SK-N-SH (cell line): ENCODE measurements at regions of chr1 and their contacts with region 1.

Region 1: DNA sequence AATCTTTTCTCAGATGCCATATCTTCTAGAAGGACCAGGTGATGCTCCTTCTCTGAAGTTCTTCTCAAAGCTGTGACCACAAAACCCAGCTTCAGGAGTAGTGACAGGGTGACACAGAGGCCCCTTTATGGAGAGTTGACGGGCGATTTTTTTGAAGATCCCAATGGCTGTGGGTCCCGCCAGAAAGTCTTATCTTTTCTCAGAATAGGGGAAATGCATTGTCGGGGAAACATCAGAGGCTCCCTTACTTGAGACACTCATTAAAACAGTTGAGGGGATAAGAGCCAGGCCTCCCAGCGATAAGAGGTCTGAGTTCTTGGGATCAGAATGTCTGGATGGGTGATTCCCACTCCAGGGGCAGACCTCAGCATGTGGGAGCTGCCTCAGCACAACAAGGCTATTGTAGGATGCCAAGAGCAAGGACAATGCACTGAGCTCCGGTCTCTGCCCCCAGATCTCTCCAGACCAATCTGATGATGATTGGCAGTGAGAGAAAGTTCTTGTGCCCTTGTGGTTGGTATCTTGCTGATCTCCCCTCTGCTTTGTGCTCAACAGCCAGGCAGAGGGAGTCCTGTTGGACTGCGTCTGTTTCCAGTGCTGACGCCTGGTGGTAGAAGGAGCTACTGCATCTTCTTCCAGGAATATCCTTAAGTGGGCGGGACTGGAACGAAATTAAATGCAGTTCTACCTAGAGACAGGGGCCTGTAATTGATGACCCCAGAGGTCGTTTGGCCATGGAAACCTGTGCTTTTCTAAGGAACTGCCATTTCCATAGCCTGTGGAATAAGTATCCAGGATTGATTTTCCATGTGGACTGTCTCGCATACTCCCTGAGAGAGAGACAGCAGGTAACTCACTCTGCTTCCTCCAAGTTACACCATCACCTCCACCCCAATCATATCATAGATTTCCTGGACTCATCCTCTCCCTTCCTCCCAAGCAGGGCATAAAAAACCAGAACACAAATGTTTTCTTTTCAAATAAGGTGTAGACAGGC is 6.8 kb upstream of the ACKR1 start:
- DNase-seq: peak; percentile 80
- H3K4me3 ChIP-seq: no peak overlapping the region; a peak in 1 of 4 replicates
- H3K27ac ChIP-seq: no peak overlapping the region
- H3K4me1 ChIP-seq: peaks cover 0 to 2% of the 10 kb centered on the region in 2 experiments; a peak in 1 of 4 replicates
- H3K27me3 ChIP-seq: peaks cover 5% of the 10 kb centered on the region; the same call in 1 of the 2 replicates
- CTCF ChIP-seq: peak; percentile 83
- EP300 ChIP-seq: no peak
- RAD21 ChIP-seq: peak; percentile 82

Region 2: GRCh38 chr1:159152031-159152430 is 45.8 kb before region 1 on chr1:
- CTCF ChIA-PET with region 1: interaction called, 14 read pairs
- POLR2A ChIA-PET with region 1: no interaction called
- DNase-seq: no peak
- H3K4me3 ChIP-seq: no peak overlapping the region
- H3K27ac ChIP-seq: no peak overlapping the region
- H3K4me1 ChIP-seq: no peaks in the 10 kb centered on the region
- H3K27me3 ChIP-seq: peaks cover 5% of the 10 kb centered on the region; the same call in 1 of the 2 replicates
- CTCF ChIP-seq: no peak
- EP300 ChIP-seq: no peak
- RAD21 ChIP-seq: no peak

Region 3: GRCh38 chr1:159161001-159161718 is 36.7 kb before region 1 on chr1:
- CTCF ChIA-PET with region 1: interaction called, 660 read pairs
- POLR2A ChIA-PET with region 1: no interaction called
- DNase-seq: peak; percentile 64
- H3K4me3 ChIP-seq: peak overlapping the region in 1 of 2 experiments; percentile 43; a peak in 1 of 4 replicates
- H3K27ac ChIP-seq: peak overlapping the region in 1 of 2 experiments; percentile 38; a peak in 1 of 4 replicates
- H3K4me1 ChIP-seq: peaks cover 0 to 12% of the 10 kb centered on the region in 2 experiments; a peak in 2 of 4 replicates
- H3K27me3 ChIP-seq: no peaks in the 10 kb centered on the region; the same call in 1 of the 2 replicates
- CTCF ChIP-seq: peak; percentile 100
- EP300 ChIP-seq: no peak
- RAD21 ChIP-seq: peak; percentile 100

Region 4: GRCh38 chr1:159184201-159184600 is 13.7 kb before region 1 on chr1:
- CTCF ChIA-PET with region 1: interaction called, 660 read pairs
- POLR2A ChIA-PET with region 1: no interaction called
- DNase-seq: no peak
- H3K4me3 ChIP-seq: no peak overlapping the region
- H3K27ac ChIP-seq: no peak overlapping the region
- H3K4me1 ChIP-seq: no peaks in the 10 kb centered on the region
- H3K27me3 ChIP-seq: no peaks in the 10 kb centered on the region; the same call in 1 of the 2 replicates
- CTCF ChIP-seq: no peak
- EP300 ChIP-seq: no peak
- RAD21 ChIP-seq: no peak

Region 5: DNA sequence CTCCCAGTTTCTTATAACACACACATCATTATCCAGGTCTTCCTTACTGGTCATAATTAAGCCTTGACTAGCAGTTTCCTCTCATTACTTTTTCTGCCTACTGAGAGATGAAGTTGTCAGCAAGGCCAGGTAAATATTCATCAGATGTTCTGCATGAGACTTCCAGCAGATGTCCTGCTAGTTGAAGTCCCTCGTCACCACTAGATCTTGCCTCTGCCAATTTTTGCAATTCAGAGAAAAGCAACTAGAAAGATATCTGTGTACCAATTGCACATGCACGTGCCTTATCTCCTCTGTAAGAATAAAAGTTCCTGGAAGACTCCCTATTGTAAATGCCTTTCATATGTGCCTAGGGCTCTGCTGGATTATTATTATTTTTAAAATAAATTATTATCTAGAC is 25.1 kb after region 1 on chr1:
- CTCF ChIA-PET with region 1: interaction called, 130 read pairs
- POLR2A ChIA-PET with region 1: no interaction called
- DNase-seq: no peak
- H3K4me3 ChIP-seq: no peak overlapping the region
- H3K27ac ChIP-seq: no peak overlapping the region
- H3K4me1 ChIP-seq: no peaks in the 10 kb centered on the region
- H3K27me3 ChIP-seq: no peaks in the 10 kb centered on the region; the same call in 1 of the 2 replicates
- CTCF ChIP-seq: no peak
- EP300 ChIP-seq: no peak
- RAD21 ChIP-seq: no peak